BJ (cell line): ENCODE measurements at regions of chr7 and their contacts with region 1.

Region 1: DNA sequence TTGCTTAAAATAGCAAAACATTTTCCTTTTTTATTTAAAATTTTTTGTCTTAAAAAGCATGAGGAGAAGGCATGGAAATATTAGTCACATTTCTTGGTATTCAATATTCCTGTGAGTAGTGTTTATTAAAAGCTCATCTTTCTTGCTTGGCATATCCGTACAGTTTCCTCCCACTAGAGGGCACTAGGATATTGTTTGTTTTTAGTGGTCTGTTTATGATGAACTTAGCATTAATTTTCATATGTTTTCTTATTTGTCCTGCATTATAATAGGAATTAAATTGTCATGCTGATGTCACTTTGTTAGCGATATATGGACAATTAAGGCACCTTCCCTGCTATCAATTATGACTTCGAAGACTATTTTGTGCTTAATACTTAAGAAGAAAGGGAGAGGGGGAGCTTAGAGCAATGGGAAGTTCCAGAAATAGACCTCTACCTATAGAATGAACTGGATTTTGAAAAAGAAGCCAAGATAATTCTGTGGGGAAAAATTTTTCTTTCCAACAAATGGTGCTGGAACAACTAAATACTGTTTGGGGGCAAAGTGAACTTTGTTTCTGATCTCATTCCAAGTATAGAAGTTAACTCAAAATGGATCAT is 91.0 kb upstream of the STRIP2 start:
- DNase-seq: no peak
- H3K4me3 ChIP-seq: no peak overlapping the region
- H3K27me3 ChIP-seq: no peaks in the 10 kb centered on the region
- CTCF ChIP-seq: peak; percentile 71

Region 2: DNA sequence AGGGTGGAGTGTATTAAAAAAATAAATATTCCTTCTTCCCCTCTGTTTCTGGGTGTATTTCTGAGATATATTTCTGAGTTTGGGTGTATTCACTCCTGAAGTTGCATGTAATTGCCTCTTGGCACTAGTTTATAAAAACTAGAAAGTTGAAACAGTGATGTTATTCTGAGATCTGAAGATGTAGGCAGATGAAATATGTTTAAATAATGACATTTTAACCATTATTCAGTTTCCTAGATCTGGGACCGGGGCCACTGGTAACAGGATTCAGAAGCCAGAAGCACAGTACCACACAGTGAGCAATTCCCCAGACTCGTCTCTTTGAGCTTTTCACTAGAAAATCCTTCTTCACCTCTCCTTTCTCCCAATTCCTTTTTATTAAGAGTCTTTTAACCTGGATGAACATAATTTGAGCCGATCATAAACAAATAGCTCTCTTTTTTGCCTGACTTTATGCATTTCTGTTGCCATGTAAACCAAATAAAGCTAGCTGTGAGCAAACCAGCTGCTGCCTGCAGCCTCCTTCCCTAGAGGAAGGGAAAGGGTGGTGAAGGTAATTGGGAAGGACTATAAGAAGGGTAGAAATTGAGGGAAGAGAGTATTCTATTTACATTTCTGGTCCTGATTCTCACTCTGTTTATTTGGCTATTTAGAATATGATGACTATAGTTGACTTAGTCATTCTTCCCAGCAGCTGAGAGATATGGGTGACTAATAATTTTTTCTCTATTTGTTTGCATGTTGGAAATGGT is 10.7 kb before region 1 on chr7:
- CTCF ChIA-PET with region 1: interaction called, 22 read pairs
- POLR2A ChIA-PET with region 1: interaction called, 3 read pairs
- DNase-seq: peak; percentile 32
- H3K4me3 ChIP-seq: no peak overlapping the region
- H3K27me3 ChIP-seq: no peaks in the 10 kb centered on the region
- CTCF ChIP-seq: no peak

Region 3: GRCh38 chr7:129376076-129376777 is 33.0 kb after region 1 on chr7:
- CTCF ChIA-PET with region 1: interaction called, 13 read pairs
- POLR2A ChIA-PET with region 1: no interaction called
- DNase-seq: no peak
- H3K4me3 ChIP-seq: no peak overlapping the region
- H3K27me3 ChIP-seq: no peaks in the 10 kb centered on the region
- CTCF ChIP-seq: peak; percentile 59

Region 4: DNA sequence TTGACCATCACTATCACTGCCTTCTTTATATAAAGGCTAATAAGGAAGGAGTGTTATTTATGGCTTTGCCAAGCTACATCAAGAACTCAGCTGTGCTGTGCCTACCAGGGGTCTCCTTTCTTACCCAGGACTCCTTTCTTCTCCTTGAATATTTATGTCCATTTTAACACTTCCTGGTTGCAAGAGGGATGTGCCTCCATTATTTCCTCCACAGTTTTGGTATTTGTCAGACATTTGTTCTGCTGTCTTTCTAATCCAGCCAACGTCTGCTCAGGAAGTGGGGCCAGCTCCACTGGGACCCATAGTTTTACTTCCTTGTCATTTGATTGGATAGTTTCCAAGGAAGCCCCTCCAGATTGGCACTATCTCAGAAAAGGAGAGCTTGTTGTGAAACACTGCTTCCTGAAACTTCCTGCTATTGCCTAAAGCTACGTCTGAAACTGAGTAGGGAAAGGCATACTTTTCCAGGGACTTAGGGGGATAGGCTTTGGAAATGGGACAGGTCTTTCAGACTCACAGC is 84.4 kb after region 1 on chr7:
- CTCF ChIA-PET with region 1: no interaction called
- POLR2A ChIA-PET with region 1: no interaction called
- DNase-seq: no peak
- H3K4me3 ChIP-seq: no peak overlapping the region
- H3K27me3 ChIP-seq: 0 out of 2 replicates have a peak, but pooled peaks cover 1% of the 10 kb centered on the region
- CTCF ChIP-seq: no peak

Region 5: DNA sequence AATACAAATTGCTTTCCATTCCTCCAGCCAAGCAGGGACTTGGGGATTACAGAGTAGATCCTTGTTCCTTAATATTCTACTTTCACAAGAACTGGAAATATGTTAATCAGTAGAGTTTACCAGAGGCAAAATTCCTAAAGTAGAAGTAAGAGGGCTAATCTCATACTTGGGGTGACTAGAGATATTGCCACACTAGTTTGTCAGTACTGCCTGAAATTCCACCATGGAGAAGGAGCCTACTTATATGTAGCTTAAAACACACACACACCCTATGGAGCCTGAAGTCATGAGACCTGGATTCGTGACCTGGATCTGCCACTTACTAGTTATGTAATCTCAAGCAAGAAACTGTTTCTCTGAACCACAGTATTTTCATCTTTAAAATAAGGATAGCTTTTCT is 124.9 kb after region 1 on chr7:
- CTCF ChIA-PET with region 1: interaction called, 18 read pairs
- POLR2A ChIA-PET with region 1: interaction called, 3 read pairs
- DNase-seq: peak; percentile 14
- H3K4me3 ChIP-seq: no peak overlapping the region
- H3K27me3 ChIP-seq: no peaks in the 10 kb centered on the region
- CTCF ChIP-seq: no peak

Region 6: DNA sequence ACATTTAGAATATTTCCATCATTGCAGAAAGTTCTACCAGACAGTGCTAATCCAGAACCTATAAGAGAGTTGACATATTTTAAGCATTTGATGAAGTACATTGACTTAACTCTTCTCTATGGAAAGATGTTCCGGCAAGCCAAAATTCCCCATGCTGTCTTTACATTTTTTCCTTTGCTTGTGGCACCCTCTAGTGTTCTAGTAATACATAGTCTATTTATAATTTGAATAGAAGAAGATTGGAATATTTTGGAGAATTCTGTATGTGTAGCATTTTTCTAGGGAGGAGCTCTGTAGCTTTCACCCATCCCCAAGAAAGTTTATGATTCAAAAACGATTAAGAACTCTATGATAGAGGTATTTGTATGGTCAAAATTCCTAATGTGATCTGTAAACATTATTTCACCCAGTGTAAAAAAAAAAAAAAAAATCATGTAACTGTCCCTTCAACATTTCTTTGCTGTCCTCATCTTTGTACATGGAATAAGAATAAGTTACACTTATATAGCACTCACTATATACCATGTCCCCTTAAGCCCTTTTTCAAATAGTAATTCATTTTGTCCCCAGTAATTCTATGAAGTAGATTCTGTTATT is 301.5 kb after region 1 on chr7:
- CTCF ChIA-PET with region 1: interaction called, 15 read pairs
- POLR2A ChIA-PET with region 1: no interaction called
- DNase-seq: no peak
- H3K4me3 ChIP-seq: no peak overlapping the region
- H3K27me3 ChIP-seq: no peaks in the 10 kb centered on the region
- CTCF ChIP-seq: peak; percentile 57